BJ (cell line): ENCODE measurements at regions of chr1 and their contacts with region 1.

Region 1: GRCh38 chr1:19485362-19486187 is at the start of gene CAPZB:
- DNase-seq: no peak
- H3K4me3 ChIP-seq: peak within 1 kb of the TSS; percentile 99
- H3K27me3 ChIP-seq: no peaks in the 10 kb centered on the region
- CTCF ChIP-seq: no peak
- polyA plus RNA-seq, gene CAPZB: 276 and 285 TPM in 2 replicates

Region 2: GRCh38 chr1:19010995-19011844 is 474.4 kb before region 1 on chr1:
- CTCF ChIA-PET with region 1: no interaction called
- POLR2A ChIA-PET with region 1: no interaction called
- DNase-seq: peak; percentile 97
- H3K4me3 ChIP-seq: no peak overlapping the region
- H3K27me3 ChIP-seq: no peaks in the 10 kb centered on the region
- CTCF ChIP-seq: no peak

Region 3: GRCh38 chr1:19300211-19300610 is 185.4 kb before region 1 on chr1:
- CTCF ChIA-PET with region 1: no interaction called
- POLR2A ChIA-PET with region 1: no interaction called
- DNase-seq: no peak
- H3K4me3 ChIP-seq: no peak overlapping the region
- H3K27me3 ChIP-seq: no peaks in the 10 kb centered on the region
- CTCF ChIP-seq: no peak

Region 4: DNA sequence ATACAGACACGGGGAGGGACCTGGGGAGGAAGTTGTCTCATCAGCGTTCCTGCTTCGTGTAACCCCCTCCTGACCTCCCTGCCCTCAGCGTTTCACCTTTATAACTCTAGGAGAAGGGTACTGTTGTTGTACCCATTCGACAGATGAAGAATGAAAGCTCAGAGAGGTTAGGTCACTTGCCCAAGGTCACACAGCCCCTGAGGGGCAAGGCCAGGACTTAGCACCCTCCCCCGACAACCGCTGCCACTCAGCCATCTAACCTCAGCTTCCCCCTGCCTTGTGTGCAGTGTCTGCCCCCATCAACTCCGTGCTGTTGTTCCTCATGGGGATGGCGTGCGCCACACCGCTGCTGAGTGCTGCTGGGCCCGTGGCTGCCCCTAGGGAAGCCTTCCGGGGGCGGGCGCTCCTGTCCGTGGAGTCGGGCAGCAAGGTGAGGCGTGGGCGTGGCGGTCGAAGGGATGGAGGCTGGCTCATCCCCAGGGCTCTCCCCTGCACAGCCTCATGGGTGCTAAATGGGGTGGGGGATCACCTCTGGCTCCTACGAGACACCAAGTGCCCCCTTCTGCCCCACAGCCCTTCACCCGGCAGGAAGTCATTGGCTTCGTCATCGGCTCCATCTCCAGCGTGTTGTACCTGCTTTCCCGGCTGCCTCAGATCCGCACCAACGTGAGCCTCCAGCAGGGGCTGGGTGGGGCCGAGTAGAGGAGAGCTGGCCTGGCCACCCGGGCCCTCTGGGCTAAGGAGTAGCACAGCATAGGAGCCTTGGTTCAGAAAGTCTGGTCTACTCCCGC is 159.4 kb before region 1 on chr1:
- CTCF ChIA-PET with region 1: no interaction called
- POLR2A ChIA-PET with region 1: no interaction called
- DNase-seq: no peak
- H3K4me3 ChIP-seq: no peak overlapping the region
- H3K27me3 ChIP-seq: no peaks in the 10 kb centered on the region
- CTCF ChIP-seq: no peak

Region 5: DNA sequence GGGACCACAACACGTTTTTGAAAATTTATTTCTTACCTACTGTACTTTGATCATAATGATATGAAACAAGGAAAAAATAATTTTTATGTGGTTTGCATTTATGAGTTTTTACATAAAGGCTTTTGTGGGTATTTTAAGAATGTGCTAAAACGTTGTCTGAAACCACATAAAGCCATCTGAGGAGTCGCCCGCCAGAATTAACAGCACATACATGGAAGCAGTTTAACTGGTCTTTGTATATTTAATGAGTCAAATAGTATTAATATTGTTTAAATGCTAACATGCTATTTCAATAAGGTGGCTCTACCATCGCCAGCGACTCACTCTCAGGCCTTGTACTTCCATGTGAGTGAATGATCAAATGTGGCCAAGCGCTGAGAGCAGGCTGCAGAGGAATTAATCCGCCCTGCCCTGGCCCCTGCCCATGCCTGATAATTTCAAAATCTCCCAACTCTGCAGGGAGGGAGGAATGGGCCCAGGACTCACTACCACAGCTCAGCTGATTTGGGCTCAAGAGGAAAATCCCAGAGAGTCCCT is 123.9 kb before region 1 on chr1:
- CTCF ChIA-PET with region 1: interaction called, 3 read pairs
- POLR2A ChIA-PET with region 1: interaction called, 13 read pairs
- DNase-seq: no peak
- H3K4me3 ChIP-seq: no peak overlapping the region
- H3K27me3 ChIP-seq: no peaks in the 10 kb centered on the region
- CTCF ChIP-seq: no peak

Region 6: GRCh38 chr1:19390901-19391595 is 94.5 kb before region 1 on chr1:
- CTCF ChIA-PET with region 1: interaction called, 14 read pairs
- POLR2A ChIA-PET with region 1: no interaction called
- DNase-seq: peak; percentile 91
- H3K4me3 ChIP-seq: peak overlapping the region; percentile 2; the same call in 1 of the 2 replicates
- H3K27me3 ChIP-seq: no peaks in the 10 kb centered on the region
- CTCF ChIP-seq: peak; percentile 91

Region 7: GRCh38 chr1:19448491-19449439 is 36.8 kb before region 1 on chr1:
- CTCF ChIA-PET with region 1: interaction called, 4 read pairs
- POLR2A ChIA-PET with region 1: interaction called, 25 read pairs
- DNase-seq: peak; percentile 80
- H3K4me3 ChIP-seq: no peak overlapping the region
- H3K27me3 ChIP-seq: no peaks in the 10 kb centered on the region
- CTCF ChIP-seq: no peak

Region 8: GRCh38 chr1:19468397-19468956 is 17.1 kb before region 1 on chr1:
- CTCF ChIA-PET with region 1: interaction called, 3 read pairs
- POLR2A ChIA-PET with region 1: interaction called, 13 read pairs
- DNase-seq: no peak
- H3K4me3 ChIP-seq: no peak overlapping the region
- H3K27me3 ChIP-seq: no peaks in the 10 kb centered on the region
- CTCF ChIP-seq: no peak

Region 9: DNA sequence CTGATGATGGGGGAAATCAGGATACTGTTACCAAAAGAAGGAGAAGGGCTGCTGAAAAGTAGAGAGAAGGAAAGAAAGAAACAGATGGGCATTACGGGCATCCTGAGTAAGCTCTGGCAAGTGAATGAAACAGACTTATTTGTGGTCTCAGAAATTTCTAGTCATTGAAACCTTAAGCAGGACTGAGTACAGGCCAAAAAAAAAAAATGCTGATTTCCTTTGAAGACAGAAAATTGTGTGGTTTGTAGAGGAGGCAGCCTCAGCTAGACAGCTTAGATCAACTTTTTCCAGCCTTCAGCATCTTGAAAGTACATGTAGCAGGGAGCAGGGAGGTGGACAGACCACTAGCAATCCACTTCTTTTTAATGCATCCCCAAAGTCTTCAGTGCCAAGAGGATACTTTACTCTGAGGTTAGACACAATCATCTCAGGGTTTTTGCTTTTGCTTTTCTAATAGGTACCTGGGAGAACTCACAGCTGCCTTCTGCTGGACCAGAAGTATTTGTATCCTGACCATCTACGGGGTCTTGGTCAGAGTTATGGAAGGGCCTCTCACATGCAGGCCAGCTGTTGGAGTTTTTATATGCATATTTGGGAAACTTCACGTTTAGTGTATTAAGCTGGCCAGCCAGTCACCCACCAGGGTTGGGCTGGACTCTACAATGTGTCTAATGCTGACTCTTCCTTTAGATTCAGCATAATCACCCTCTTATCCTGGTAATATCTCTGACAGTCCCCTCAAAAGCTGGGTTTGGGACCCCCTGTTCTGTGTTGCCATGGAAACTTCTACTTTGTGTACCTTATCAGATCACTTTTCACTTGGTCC is 10.4 kb after region 1 on chr1:
- CTCF ChIA-PET with region 1: interaction called, 13 read pairs
- POLR2A ChIA-PET with region 1: interaction called, 10 read pairs
- DNase-seq: no peak
- H3K4me3 ChIP-seq: no peak overlapping the region
- H3K27me3 ChIP-seq: peaks cover 2% of the 10 kb centered on the region; the same call in 1 of the 2 replicates
- CTCF ChIP-seq: peak; percentile 14; the same call in 1 of the 2 replicates